SK-N-SH (cell line): ENCODE measurements at regions of chr9 and their contacts with region 1.

Region 1: DNA sequence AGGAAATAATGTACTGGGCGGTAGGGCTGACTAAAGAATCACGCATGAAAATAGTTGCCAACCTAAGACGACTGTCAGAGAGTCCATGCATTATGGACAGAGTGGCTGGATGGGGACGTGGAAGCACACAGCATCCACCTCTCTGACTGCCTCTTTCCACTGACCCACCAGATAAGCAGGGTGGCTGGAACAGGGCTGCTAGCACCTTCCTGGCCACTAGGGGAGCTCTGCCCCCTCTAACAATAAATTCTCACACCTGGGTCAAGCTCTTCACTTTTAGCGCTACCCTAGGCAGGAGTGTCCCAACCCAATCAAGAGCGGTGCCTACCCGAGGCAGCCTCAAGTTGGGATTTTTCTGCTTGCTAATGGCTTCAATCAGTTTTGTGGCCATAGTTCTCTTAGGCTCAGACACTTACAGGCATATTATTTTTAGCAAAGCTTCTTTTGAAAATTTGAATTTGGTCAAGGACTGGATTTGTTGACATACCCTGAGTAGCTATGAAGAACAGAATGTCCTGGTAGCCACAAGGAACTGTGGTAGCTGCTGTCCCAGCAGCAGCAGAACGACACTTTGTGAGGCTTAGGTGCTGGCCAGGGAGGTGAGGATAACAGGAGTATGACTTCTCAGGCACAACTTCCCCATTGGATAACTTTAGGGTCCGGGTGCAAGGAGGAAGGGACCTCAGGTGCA is 6.9 kb upstream of the TPM2 start:
- DNase-seq: peak; percentile 85
- H3K4me3 ChIP-seq: no peak overlapping the region; a peak in 1 of 4 replicates
- H3K27ac ChIP-seq: peak overlapping the region in 1 of 2 experiments; percentile 77; a peak in 1 of 4 replicates
- H3K4me1 ChIP-seq: 0 out of 4 replicates have a peak, but pooled peaks cover 0 to 1% of the 10 kb centered on the region in 2 experiments
- H3K27me3 ChIP-seq: no peaks in the 10 kb centered on the region
- CTCF ChIP-seq: peak; percentile 86
- EP300 ChIP-seq: no peak
- RAD21 ChIP-seq: peak; percentile 55

Region 2: DNA sequence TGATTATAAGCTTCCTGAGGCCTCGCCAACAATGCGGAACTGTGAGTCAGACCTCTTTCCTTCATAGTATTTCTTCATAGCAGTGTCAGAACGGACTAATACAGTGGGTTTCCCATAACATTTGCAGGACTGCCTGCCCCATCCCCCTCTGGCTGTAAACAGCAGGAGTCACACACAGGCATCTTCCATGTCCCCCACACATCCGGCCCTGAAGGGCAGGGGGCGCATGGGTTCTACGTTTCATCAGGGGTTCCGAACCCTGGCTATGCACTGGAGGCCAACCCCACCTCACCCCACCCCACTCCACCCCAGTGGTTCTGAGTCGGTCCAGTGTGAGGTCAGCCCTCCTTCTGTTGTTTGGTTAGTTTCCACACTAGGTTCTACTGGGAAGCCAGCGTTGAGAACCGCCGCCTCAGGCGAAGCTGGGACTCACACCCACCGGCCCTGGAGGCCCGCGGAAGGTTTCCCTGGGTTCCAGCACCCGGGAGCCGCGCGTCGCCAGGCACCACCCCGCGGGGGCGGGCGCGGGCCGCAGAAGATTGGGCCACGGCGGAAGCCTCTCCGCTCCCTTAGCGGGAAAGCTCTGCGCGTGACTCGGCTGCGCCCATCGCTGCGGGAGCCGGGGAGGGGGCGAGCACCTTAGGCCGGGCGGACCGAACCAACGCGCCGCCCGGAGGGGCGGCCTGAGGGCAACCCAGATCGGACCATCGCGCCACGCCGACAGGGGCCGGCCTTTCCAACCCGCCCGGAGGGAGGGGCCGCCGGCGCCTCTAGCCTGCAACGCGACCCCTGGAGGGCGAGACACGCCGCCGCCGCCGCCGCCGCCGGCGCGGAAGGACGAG is 207.1 kb before region 1 on chr9 and contains the start of gene RUSC2:
- CTCF ChIA-PET with region 1: no interaction called
- POLR2A ChIA-PET with region 1: no interaction called
- DNase-seq: peak; percentile 88
- H3K4me3 ChIP-seq: peak within 1 kb of the TSS; percentile 61 to 85
- H3K27ac ChIP-seq: peak within 1 kb of the TSS; percentile 81 to 82
- H3K4me1 ChIP-seq: peaks cover 7 to 24% of the 10 kb centered on the region in 2 experiments
- H3K27me3 ChIP-seq: no peaks in the 10 kb centered on the region
- CTCF ChIP-seq: peak; percentile 57
- EP300 ChIP-seq: no peak
- RAD21 ChIP-seq: peak; percentile 58
- polyA plus RNA-seq, gene RUSC2: 14.5 and 15.0 TPM in 2 replicates

Region 3: GRCh38 chr9:35636135-35636876 is 60.4 kb before region 1 on chr9:
- CTCF ChIA-PET with region 1: no interaction called
- POLR2A ChIA-PET with region 1: no interaction called
- DNase-seq: no peak
- H3K4me3 ChIP-seq: no peak overlapping the region
- H3K27ac ChIP-seq: no peak overlapping the region
- H3K4me1 ChIP-seq: no peaks in the 10 kb centered on the region
- H3K27me3 ChIP-seq: no peaks in the 10 kb centered on the region
- CTCF ChIP-seq: no peak
- EP300 ChIP-seq: no peak
- RAD21 ChIP-seq: no peak

Region 4: DNA sequence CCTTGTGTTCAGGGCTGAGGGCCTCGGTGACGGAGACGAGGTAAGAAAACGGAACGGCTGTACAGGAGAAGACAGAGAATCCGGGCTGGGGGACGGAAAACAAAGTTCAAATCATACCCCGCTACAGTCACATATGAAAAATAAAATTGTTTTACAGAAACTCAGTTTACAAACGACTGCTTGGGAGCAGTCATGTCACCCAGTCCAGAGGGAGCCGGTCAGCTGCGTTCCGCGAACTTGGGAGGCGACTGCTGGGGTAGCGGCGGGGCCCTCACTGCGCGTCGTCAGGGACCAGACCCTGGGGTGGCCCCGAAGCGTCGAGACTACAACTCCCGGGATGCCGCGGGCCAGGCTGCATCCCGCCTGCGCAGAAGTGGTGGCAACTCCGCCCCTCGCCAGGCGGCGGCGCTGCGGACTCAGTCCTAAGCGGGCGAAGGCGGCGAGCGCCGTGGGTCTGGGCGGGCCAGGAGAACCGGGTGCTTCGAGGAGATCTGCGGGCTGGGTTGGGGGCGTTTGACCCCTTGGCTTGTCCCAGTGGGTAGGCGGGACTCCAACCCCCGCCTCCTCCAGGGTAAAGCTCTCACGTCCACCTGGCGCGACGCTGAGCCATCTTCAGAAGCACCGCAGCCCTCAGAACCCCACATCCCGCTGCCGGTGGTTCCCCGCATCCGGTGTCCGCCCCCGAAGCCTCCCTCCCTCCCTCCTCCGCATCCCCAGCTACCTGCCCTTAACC is 50.0 kb before region 1 on chr9:
- CTCF ChIA-PET with region 1: interaction called, 25 read pairs
- POLR2A ChIA-PET with region 1: no interaction called
- DNase-seq: peak; percentile 97
- H3K4me3 ChIP-seq: peak overlapping the region; percentile 61 to 67
- H3K27ac ChIP-seq: peak overlapping the region in 1 of 2 experiments; percentile 76; a peak in 1 of 4 replicates
- H3K4me1 ChIP-seq: peaks cover 6 to 7% of the 10 kb centered on the region in 2 experiments; a peak in 2 of 4 replicates
- H3K27me3 ChIP-seq: no peaks in the 10 kb centered on the region
- CTCF ChIP-seq: peak; percentile 74
- EP300 ChIP-seq: no peak
- RAD21 ChIP-seq: peak; percentile 76

Region 5: DNA sequence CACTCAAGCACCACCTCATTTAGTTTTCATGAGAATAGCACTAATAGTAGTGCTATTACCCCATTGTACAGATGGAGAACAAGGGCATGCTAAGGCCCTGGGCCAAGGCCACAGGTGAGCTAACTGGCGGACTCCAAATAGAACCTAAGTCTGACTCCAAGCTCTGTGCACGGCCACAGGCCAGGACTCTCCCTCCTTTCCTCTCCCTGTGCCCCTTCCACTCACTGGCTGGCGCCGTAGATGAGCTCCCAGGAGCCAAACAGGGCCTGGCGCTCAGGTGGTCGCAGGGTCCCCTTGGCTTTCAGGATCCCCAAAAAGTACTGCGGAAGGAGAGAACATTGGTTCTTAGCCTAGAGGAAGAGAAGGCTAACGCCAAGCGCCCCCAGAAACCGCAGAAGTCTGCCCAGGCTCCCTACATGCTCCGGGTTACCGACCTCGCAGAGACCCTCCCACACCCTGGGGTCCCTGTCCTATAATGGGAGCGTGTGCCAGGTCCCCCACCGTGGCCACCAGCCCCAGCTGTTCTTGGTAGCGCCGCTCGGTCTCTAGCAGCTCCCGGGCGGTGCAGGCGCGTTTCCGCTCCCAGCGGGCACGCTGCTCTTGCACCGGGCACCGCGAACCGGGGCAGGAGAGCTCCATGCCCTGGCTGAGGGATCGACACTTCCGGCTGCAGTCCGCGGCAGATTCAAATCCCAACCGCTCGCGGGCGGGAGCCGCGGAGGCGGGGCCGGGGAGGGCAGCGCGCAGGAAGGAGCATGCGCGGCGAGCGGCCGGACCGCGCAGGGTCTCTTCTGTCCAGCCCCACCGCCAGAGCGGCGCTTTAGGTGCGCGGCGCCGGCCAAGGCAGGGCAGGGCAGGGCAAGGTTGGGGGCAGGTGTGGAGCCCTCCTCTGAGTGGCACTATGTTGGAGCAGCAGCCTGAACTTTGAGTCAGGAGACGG is 31.9 kb before region 1 on chr9 and contains the start of gene ARHGEF39:
- CTCF ChIA-PET with region 1: interaction called, 30 read pairs
- POLR2A ChIA-PET with region 1: no interaction called
- DNase-seq: peak; percentile 98
- H3K4me3 ChIP-seq: peak within 1 kb of the TSS; percentile 61 to 65
- H3K27ac ChIP-seq: peak within 1 kb of the TSS; percentile 53 to 80
- H3K4me1 ChIP-seq: peaks cover 0 to 12% of the 10 kb centered on the region in 2 experiments; a peak in 1 of 4 replicates
- H3K27me3 ChIP-seq: no peaks in the 10 kb centered on the region
- CTCF ChIP-seq: peak; percentile 55
- EP300 ChIP-seq: peak in 1 of 2 experiments; percentile 53; a peak in 2 of 4 replicates
- RAD21 ChIP-seq: no peak; the same call in 1 of the 2 replicates
- polyA plus RNA-seq, gene ARHGEF39: 4.9 and 5.2 TPM in 2 replicates

Region 6: GRCh38 chr9:35682051-35682450 is 14.6 kb before region 1 on chr9:
- CTCF ChIA-PET with region 1: interaction called, 26 read pairs
- POLR2A ChIA-PET with region 1: interaction called, 3 read pairs
- DNase-seq: no peak
- H3K4me3 ChIP-seq: no peak overlapping the region
- H3K27ac ChIP-seq: no peak overlapping the region
- H3K4me1 ChIP-seq: peaks cover 0 to 9% of the 10 kb centered on the region in 2 experiments; a peak in 1 of 4 replicates
- H3K27me3 ChIP-seq: no peaks in the 10 kb centered on the region
- CTCF ChIP-seq: no peak
- EP300 ChIP-seq: no peak
- RAD21 ChIP-seq: no peak

Region 7: DNA sequence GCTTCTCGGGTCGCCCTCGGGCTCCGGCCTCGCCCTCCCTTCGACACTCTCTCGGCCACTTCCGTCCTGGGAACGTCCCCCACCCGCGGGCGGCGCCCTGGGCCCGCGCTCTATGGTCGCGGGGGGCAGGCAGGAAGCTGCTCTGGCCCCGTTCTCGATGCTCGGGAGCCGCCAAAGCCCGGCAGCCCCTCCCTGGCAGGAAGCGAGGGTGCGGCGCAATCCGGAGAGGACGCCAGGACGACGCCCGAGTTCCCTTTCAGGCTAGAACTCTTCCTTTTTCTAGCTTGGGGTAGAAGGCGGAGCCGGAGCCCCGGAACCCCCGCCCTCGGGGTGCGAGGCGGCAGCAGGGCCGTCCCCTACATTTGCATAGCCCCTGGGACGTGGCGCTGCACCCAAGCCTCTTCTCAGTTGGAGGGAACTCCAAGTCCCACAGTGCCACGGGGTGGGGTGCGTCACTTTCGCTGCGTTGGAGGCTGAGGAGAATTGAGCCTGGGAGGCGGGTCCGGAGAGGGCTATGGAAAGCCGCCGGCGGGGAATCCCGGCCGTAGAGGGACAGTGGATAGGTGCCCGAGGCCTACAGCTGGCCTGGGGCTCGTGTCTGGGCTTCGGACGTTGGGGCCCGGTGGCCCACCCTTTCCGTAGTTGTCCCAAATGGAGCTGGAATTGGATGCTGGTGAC is 35.6 kb after region 1 on chr9 and contains the starts of genes CREB3 and TLN1:
- CTCF ChIA-PET with region 1: interaction called, 103 read pairs
- POLR2A ChIA-PET with region 1: interaction called, 4 read pairs
- DNase-seq: peak; percentile 97
- H3K4me3 ChIP-seq: peak within 1 kb of the TSS; percentile 89 to 96
- H3K27ac ChIP-seq: peak within 1 kb of the TSS; percentile 88 to 94
- H3K4me1 ChIP-seq: peaks cover 34 to 49% of the 10 kb centered on the region in 2 experiments
- H3K27me3 ChIP-seq: no peaks in the 10 kb centered on the region
- CTCF ChIP-seq: peak; percentile 22; the same call in 1 of the 2 replicates
- EP300 ChIP-seq: peak in 1 of 2 experiments; percentile 62; a peak in 1 of 4 replicates
- RAD21 ChIP-seq: no peak
- polyA plus RNA-seq, gene CREB3: 33.9 and 38.6 TPM in 2 replicates
- polyA plus RNA-seq, gene TLN1: 91.8 and 115 TPM in 2 replicates

Region 8: DNA sequence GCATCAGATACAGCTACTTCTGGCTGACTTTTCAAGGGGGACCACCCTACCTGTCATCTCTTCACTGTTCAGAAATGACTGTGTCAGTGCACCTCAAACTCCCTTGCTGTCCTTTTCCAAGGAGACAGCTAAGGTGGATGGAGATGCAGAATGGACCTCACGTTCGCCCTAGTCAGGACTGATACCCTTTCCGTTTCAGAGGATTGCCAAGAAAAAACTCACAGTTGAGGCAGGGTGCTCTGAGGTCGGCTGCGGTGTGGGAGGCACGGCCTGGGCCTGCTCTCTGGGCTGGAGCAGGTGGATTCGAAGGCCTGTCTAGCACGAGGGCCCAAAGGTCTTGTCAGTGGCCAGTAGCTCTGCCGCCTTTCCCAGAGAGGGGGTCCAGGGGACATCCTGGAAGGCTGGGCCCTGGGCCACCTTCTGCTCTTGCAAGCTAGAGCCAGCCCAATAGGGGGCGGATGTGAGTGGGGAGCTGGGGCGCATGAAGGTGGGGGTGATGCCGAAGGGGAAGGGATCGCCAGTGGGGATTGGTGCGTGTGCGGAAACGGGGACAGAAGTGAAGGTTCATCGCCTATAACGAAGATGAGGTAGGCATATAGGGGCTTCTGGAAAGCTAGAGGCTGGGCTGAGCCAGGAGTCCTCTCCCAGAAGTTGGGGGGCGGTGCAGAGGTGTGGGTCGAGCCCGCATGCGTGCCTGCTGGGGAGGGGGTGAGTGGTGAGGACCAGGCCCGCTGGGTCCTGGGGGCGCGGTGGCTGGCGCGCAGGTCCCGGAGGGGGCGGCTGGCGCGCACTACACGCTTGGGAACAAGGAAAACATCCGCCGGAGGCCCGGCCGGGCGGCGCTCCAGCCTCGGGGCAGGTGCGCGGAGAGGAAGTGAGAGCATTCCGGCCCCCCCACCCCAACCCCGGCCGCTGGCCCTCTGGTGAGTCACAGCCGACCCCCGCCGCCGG is 59.9 kb after region 1 on chr9:
- CTCF ChIA-PET with region 1: interaction called, 13 read pairs
- POLR2A ChIA-PET with region 1: interaction called, 3 read pairs
- DNase-seq: peak; percentile 88
- H3K4me3 ChIP-seq: peak overlapping the region; percentile 52 to 65
- H3K27ac ChIP-seq: peak overlapping the region in 1 of 2 experiments; percentile 75; a peak in 3 of 4 replicates
- H3K4me1 ChIP-seq: peaks cover 9 to 17% of the 10 kb centered on the region in 2 experiments; a peak in 3 of 4 replicates
- H3K27me3 ChIP-seq: no peaks in the 10 kb centered on the region
- CTCF ChIP-seq: peak; percentile 61
- EP300 ChIP-seq: no peak
- RAD21 ChIP-seq: peak; percentile 47

Region 9: GRCh38 chr9:35891646-35892045 is 195.0 kb after region 1 on chr9:
- CTCF ChIA-PET with region 1: no interaction called
- POLR2A ChIA-PET with region 1: no interaction called
- DNase-seq: no peak
- H3K4me3 ChIP-seq: no peak overlapping the region
- H3K27ac ChIP-seq: no peak overlapping the region
- H3K4me1 ChIP-seq: no peaks in the 10 kb centered on the region
- H3K27me3 ChIP-seq: 0 out of 2 replicates have a peak, but pooled peaks cover 8% of the 10 kb centered on the region
- CTCF ChIP-seq: no peak
- EP300 ChIP-seq: no peak
- RAD21 ChIP-seq: no peak